H1 (cell line): ENCODE measurements at regions of chr10 and their contacts with region 1.

Region 1: DNA sequence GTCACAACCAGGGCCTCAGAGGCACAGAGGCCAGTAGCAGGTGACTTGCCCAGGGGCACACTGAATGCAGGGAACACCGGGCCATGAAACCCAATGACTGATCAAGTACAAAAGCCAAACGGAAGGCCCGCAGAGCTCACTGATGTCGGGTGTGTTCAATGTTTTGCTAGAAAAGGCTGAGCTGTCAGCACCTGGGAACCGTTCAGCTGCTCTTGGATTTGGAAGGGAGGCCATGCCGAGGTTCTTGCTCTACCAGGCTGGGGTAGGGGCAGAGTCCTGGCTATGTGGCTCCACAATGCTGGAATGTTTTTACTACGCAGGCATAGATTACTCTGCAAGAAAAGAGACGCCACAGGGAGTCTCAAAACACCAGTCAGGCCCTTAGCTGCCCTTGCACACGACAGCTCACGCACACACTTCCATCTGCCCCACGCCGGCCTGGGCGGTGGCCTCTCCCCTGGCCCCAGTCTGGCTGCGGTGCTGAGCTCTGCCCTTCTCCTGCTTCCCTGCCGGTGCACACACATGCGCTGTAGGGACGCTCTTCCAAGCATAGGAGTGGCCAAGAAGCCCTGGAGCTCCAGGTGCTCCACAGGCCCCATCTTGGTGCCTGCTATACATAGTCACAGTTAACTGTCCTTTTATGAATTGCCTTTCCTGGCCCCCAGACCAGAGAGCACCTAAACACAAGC is 79.9 kb downstream of the ZRANB1 start:
- DNase-seq: no peak
- H3K4me3 ChIP-seq: no peak overlapping the region
- H3K27ac ChIP-seq: no peak overlapping the region; the same call in 1 of the 2 replicates
- H3K4me1 ChIP-seq: no peaks in the 10 kb centered on the region; a peak in 2 of 7 replicates
- H3K27me3 ChIP-seq: no peaks in the 10 kb centered on the region
- CTCF ChIP-seq: no peak
- EP300 ChIP-seq: no peak
- POLR2A ChIP-seq: no peak
- RAD21 ChIP-seq: no peak

Region 2: GRCh38 chr10:124992462-124993344 is 29.1 kb before region 1 on chr10:
- CTCF ChIA-PET with region 1: interaction called, 12 read pairs
- POLR2A ChIA-PET with region 1: no interaction called
- DNase-seq: peak in 1 of 2 experiments; percentile 77
- H3K4me3 ChIP-seq: no peak overlapping the region
- H3K27ac ChIP-seq: no peak overlapping the region
- H3K4me1 ChIP-seq: no peaks in the 10 kb centered on the region; a peak in 1 of 7 replicates
- H3K27me3 ChIP-seq: no peaks in the 10 kb centered on the region
- CTCF ChIP-seq: peak; percentile 23 to 57 (median 35)
- EP300 ChIP-seq: no peak
- POLR2A ChIP-seq: no peak
- RAD21 ChIP-seq: peak; percentile 48 to 61